CD14-positive monocyte (primary cell): ENCODE measurements at regions of chr2 and their contacts with region 1.

Region 1: DNA sequence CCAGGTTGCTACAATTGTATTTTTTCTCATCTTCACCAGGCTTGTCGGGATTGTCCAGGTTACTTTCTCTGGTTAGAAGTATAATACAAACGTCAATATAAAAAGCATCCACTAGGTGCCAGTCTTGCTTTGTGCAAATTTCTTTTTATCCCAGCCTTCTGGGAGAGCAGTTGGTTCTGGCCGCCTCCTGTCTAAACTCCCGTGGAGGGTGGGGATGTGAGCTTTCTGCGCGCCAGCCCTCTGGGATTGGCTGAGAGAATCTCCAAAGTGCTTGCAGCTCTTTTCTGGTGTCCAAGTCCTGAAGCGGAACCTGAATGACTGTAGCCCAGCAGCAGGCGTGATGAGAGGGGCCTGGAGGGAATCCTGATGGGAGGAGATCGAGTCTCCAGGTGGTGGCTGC is 22.4 kb upstream of the TOGARAM2 start:
- DNase-seq: peak; percentile 30 to 81 (median 56)
- H3K4me3 ChIP-seq: no peak overlapping the region
- H3K4me3 Mint-ChIP-seq: no peak overlapping the region
- H3K27ac ChIP-seq: no peak overlapping the region
- H3K27ac Mint-ChIP-seq: peak overlapping the region in 1 of 7 donors; percentile 80
- H3K4me1 ChIP-seq: peaks cover 11 to 18% of the 10 kb centered on the region in 2 donors
- H3K4me1 Mint-ChIP-seq: peaks cover 22% of the 10 kb centered on the region
- H3K27me3 ChIP-seq: no peaks in the 10 kb centered on the region
- H3K27me3 Mint-ChIP-seq: peaks cover 0 to 3% (median 2%) of the 10 kb centered on the region in 3 donors
- CTCF ChIP-seq: peak; percentile 79

Region 2: DNA sequence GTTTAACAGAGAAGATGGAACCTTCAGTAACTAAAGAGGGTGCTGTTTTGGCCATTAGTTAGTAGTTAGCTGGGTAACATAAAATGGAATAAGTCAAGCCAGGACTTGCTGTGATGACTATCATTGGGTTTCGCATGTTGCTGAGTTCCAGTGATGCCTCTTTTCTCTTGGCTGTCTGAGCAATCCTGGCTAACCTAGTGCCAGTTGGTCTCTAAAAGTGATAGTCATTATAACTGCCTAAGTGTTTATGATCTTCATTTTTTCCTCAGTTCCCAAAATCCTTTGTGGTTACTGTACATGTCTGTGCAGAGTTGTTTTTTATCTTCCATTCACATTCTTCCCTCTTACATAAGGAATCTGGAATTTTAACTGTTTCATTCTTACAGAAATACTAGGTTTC is 30.8 kb before region 1 on chr2:
- intact Hi-C with region 1: no loop called
- DNase-seq: no peak
- H3K4me3 ChIP-seq: no peak overlapping the region
- H3K4me3 Mint-ChIP-seq: no peak overlapping the region
- H3K27ac ChIP-seq: no peak overlapping the region
- H3K27ac Mint-ChIP-seq: peak overlapping the region in 2 of 7 donors; percentile 30 to 76
- H3K4me1 ChIP-seq: no peaks in the 10 kb centered on the region
- H3K4me1 Mint-ChIP-seq: no peaks in the 10 kb centered on the region
- H3K27me3 ChIP-seq: no peaks in the 10 kb centered on the region
- H3K27me3 Mint-ChIP-seq: no peaks in the 10 kb centered on the region
- CTCF ChIP-seq: no peak

Region 3: GRCh38 chr2:29075894-29076705 is 117.4 kb after region 1 on chr2:
- intact Hi-C with region 1: no loop called
- DNase-seq: no peak
- H3K4me3 ChIP-seq: no peak overlapping the region
- H3K4me3 Mint-ChIP-seq: no peak overlapping the region
- H3K27ac ChIP-seq: no peak overlapping the region
- H3K27ac Mint-ChIP-seq: no peak overlapping the region
- H3K4me1 ChIP-seq: peaks cover 7 to 9% of the 10 kb centered on the region in 2 donors
- H3K4me1 Mint-ChIP-seq: peaks cover 8% of the 10 kb centered on the region
- H3K27me3 ChIP-seq: no peaks in the 10 kb centered on the region
- H3K27me3 Mint-ChIP-seq: peaks cover 0 to 2% (median 1%) of the 10 kb centered on the region in 3 donors
- CTCF ChIP-seq: no peak

Region 4: GRCh38 chr2:29115797-29116781 is 157.4 kb after region 1 on chr2:
- intact Hi-C with region 1: loop called in 1 of 2 experiments (anchors 10 kb)
- DNase-seq: peak; percentile 80 to 85 (median 82)
- H3K4me3 ChIP-seq: peak overlapping the region; percentile 65 to 90 (median 74)
- H3K4me3 Mint-ChIP-seq: peak overlapping the region; percentile 88 to 91
- H3K27ac ChIP-seq: peak overlapping the region; percentile 91
- H3K27ac Mint-ChIP-seq: peak overlapping the region; percentile 94 to 97 (median 96)
- H3K4me1 ChIP-seq: peaks cover 31 to 46% of the 10 kb centered on the region in 2 donors
- H3K4me1 Mint-ChIP-seq: peaks cover 44% of the 10 kb centered on the region
- H3K27me3 ChIP-seq: no peaks in the 10 kb centered on the region
- H3K27me3 Mint-ChIP-seq: peaks cover 0 to 11% (median 0%) of the 10 kb centered on the region in 3 donors
- CTCF ChIP-seq: no peak

Region 5: GRCh38 chr2:29196792-29197788 is 238.4 kb after region 1 on chr2:
- intact Hi-C with region 1: loop called (anchors 2 kb)
- DNase-seq: peak; percentile 49 to 61 (median 55)
- H3K4me3 ChIP-seq: no peak overlapping the region
- H3K4me3 Mint-ChIP-seq: no peak overlapping the region
- H3K27ac ChIP-seq: no peak overlapping the region
- H3K27ac Mint-ChIP-seq: no peak overlapping the region
- H3K4me1 ChIP-seq: peaks cover 8 to 9% of the 10 kb centered on the region in 2 donors
- H3K4me1 Mint-ChIP-seq: peaks cover 13% of the 10 kb centered on the region
- H3K27me3 ChIP-seq: no peaks in the 10 kb centered on the region
- H3K27me3 Mint-ChIP-seq: peaks cover 0 to 1% (median 0%) of the 10 kb centered on the region in 3 donors
- CTCF ChIP-seq: peak; percentile 88